PC-9 (cell line): ENCODE measurements at regions of chr20 and their contacts with region 1.

Region 1: DNA sequence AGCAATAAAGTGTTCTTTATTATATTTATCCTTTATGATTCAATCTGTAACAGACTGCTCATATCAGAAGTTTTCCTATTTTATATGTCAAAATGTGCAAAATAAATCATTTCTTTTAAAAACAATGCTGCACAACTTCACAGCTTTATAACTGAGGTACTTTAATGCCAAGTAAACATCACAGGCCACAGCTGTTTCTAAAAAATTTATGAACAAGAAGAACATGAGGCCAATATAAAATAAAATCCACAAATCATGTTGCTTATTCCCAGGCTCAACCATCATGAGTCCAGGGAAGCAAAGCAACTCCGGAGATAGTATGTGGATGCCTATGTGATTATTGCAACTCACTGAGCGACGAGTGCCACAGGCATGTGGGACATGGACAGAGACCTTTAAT is 195.5 kb downstream of the ISM1 start:
- DNase-seq: no peak
- H3K4me3 ChIP-seq: no peak overlapping the region
- H3K27ac ChIP-seq: no peak overlapping the region
- H3K4me1 ChIP-seq: peaks cover 18% of the 10 kb centered on the region
- H3K27me3 ChIP-seq: no peaks in the 10 kb centered on the region
- CTCF ChIP-seq: no peak

Region 2: DNA sequence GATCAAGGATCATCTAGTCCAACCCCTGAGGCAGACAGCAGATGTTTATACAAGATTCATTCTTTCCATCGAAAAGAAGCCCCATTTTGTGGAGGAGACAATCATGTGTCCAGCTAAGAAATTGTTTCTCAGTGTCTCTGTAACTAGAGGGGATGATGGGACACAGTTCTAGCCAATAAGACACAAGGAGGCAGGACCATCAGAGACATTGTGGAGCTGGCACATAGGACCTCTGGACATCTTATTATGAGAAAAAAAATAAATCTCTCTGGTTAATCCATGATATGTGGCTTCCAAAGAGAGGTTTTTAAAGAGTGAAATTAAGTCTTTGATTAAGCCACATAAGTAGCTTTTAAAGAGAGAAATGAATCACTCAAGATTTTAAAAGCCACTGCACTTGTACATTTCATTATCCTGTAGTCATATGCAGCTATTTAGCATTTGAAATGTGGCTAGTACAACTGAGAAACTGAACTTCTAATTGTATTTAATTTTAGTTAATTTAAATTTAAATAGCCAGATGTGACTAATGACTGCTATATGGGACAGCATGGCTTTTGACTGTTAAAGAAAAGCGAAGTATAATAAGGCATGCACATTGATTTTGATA is 45.4 kb after region 1 on chr20:
- CTCF ChIA-PET with region 1: no interaction called
- POLR2A ChIA-PET with region 1: no interaction called
- intact Hi-C with region 1: loop called (anchors 2 kb)
- DNase-seq: no peak
- H3K4me3 ChIP-seq: no peak overlapping the region
- H3K27ac ChIP-seq: no peak overlapping the region
- H3K4me1 ChIP-seq: no peaks in the 10 kb centered on the region
- H3K27me3 ChIP-seq: no peaks in the 10 kb centered on the region
- CTCF ChIP-seq: no peak